CD8-positive, alpha-beta T cell (primary cell): ENCODE measurements at regions of chr10 and their contacts with region 1.

Region 1: DNA sequence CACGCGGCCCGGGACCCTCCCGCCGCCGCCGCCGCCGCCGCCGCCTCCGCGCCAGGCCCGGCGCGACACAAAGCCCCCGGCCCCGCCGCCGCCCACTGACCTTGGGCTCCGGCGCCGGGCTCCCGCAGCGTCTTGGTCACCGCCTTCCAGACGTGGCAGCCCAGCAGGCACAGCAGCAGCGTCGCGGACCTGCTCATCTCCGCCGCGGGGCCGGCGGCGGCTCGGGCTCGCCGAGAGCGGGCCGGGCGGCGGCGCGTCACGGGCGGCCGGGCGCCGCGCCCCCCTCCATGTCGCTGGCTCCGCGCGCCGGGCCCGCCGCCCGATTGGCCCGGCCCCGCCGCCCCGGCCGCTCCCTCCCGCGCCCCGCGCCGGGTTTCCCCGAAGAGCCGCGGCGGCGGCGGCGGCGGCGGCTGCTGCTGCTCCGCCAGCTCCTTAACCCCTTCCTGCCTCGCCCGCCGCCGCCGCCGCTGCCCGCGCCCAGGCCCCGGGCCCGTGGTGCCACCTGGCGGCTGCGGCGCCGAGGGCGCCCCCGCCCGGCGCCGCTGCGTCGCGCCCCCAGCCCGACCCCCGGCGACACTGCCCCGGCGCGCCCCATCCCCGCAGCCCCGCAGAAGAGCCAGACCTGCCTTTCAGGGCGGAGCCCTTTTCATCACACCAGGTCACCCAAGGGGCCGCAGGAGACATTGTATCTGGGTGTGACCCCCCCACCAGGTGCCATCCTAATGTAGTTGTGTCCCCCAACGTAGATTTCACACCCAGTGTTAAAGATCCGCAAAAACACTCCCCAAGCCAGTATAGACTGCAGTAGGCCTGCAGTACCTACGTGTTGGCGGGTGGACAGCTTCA is at the start of gene FAM171A1:
- DNase-seq: peak; percentile 12 to 80 (median 57)
- ATAC-seq: peak; percentile 78
- H3K4me3 ChIP-seq: peak within 1 kb of the TSS; percentile 25 to 33
- H3K4me3 Mint-ChIP-seq: peak within 1 kb of the TSS; percentile 80
- H3K27ac ChIP-seq: no peak within 1 kb of the TSS
- H3K27ac Mint-ChIP-seq: no peak within 1 kb of the TSS
- H3K4me1 ChIP-seq: peaks cover 9% of the 10 kb centered on the region
- H3K4me1 Mint-ChIP-seq: peaks cover 12% of the 10 kb centered on the region
- H3K27me3 ChIP-seq: peaks cover 0 to 9% of the 10 kb centered on the region in 2 experiments
- H3K27me3 Mint-ChIP-seq: peaks cover 33% of the 10 kb centered on the region
- CTCF ChIP-seq: no peak
- total RNA-seq, gene FAM171A1: 1.7 TPM

Region 2: GRCh38 chr10:14556285-14556956 is 814.7 kb before region 1 on chr10:
- CTCF ChIA-PET with region 1: no interaction called
- POLR2A ChIA-PET with region 1: no interaction called
- intact Hi-C with region 1: no loop called
- DNase-seq: peak in 4 of 9 experiments; percentile 5 to 76 (median 56)
- ATAC-seq: peak; percentile 24
- H3K4me3 ChIP-seq: no peak overlapping the region
- H3K4me3 Mint-ChIP-seq: peak overlapping the region; percentile 27
- H3K27ac ChIP-seq: peak overlapping the region in 1 of 2 experiments; percentile 82
- H3K27ac Mint-ChIP-seq: peak overlapping the region; percentile 86
- H3K4me1 ChIP-seq: peaks cover 98% of the 10 kb centered on the region
- H3K4me1 Mint-ChIP-seq: peaks cover 93% of the 10 kb centered on the region
- H3K27me3 ChIP-seq: no peaks in the 10 kb centered on the region
- H3K27me3 Mint-ChIP-seq: no peaks in the 10 kb centered on the region
- CTCF ChIP-seq: no peak

Region 3: GRCh38 chr10:15088428-15089261 is 282.4 kb before region 1 on chr10 and contains the start of gene ACBD7:
- CTCF ChIA-PET with region 1: no interaction called
- POLR2A ChIA-PET with region 1: no interaction called
- intact Hi-C with region 1: loop called in 1 of 2 experiments (anchors 5 kb)
- DNase-seq: peak; percentile 54 to 88 (median 76)
- ATAC-seq: peak; percentile 98
- H3K4me3 ChIP-seq: peak within 1 kb of the TSS; percentile 53 to 56
- H3K4me3 Mint-ChIP-seq: peak within 1 kb of the TSS; percentile 82
- H3K27ac ChIP-seq: no peak within 1 kb of the TSS
- H3K27ac Mint-ChIP-seq: no peak within 1 kb of the TSS
- H3K4me1 ChIP-seq: no peaks in the 10 kb centered on the region
- H3K4me1 Mint-ChIP-seq: peaks cover 4% of the 10 kb centered on the region
- H3K27me3 ChIP-seq: no peaks in the 10 kb centered on the region
- H3K27me3 Mint-ChIP-seq: no peaks in the 10 kb centered on the region
- CTCF ChIP-seq: peak; percentile 48
- total RNA-seq, gene ACBD7: 0.86 to 1.8 TPM

Region 4: DNA sequence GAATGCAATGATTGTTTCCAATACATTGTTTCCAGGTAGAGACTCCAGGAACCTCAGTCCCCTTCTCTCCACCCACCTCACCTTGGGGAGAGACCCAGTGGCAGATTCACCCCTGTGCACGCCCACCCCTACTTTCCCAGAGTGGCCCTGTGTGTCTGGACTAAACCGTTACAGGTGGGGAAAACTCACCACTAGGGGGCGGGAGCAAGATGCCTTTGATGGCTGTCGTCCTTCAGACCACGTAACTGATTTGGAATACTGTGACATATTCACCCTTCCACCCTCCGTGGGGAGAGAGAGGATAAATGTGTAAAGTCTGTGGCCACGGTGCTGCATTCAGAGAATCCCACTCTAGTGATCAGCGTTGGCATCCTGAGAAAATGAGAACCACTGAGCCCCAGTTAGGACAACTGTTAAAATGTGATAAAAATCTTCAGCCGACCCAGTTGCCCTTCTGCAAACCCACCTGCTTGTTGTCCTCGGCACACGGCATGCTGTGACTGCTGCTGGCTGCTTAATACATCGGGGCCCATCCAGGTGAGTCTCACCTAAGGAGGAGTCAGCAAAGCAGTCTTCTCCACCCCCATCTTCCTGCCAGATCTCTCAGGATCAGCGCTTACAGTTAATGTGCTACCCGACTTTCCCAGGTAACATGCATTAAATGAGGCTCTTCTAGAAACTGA is 161.1 kb before region 1 on chr10:
- CTCF ChIA-PET with region 1: no interaction called
- POLR2A ChIA-PET with region 1: no interaction called
- intact Hi-C with region 1: loop called (anchors 1 kb)
- DNase-seq: peak; percentile 58 to 90 (median 84)
- ATAC-seq: peak; percentile 61
- H3K4me3 ChIP-seq: no peak overlapping the region
- H3K4me3 Mint-ChIP-seq: peak overlapping the region; percentile 70
- H3K27ac ChIP-seq: no peak overlapping the region
- H3K27ac Mint-ChIP-seq: peak overlapping the region; percentile 73
- H3K4me1 ChIP-seq: peaks cover 30% of the 10 kb centered on the region
- H3K4me1 Mint-ChIP-seq: peaks cover 60% of the 10 kb centered on the region
- H3K27me3 ChIP-seq: no peaks in the 10 kb centered on the region
- H3K27me3 Mint-ChIP-seq: no peaks in the 10 kb centered on the region
- CTCF ChIP-seq: peak; percentile 90

Region 5: GRCh38 chr10:15254808-15255648 is 116.1 kb before region 1 on chr10:
- CTCF ChIA-PET with region 1: no interaction called
- POLR2A ChIA-PET with region 1: no interaction called
- intact Hi-C with region 1: loop called in 1 of 2 experiments (anchors 5 kb)
- DNase-seq: peak in 7 of 9 experiments; percentile 2 to 57 (median 22)
- ATAC-seq: peak; percentile 34
- H3K4me3 ChIP-seq: peak overlapping the region; percentile 50 to 73
- H3K4me3 Mint-ChIP-seq: peak overlapping the region; percentile 98
- H3K27ac ChIP-seq: peak overlapping the region; percentile 13 to 20
- H3K27ac Mint-ChIP-seq: peak overlapping the region; percentile 93
- H3K4me1 ChIP-seq: peaks cover 18% of the 10 kb centered on the region
- H3K4me1 Mint-ChIP-seq: peaks cover 43% of the 10 kb centered on the region
- H3K27me3 ChIP-seq: no peaks in the 10 kb centered on the region
- H3K27me3 Mint-ChIP-seq: no peaks in the 10 kb centered on the region
- CTCF ChIP-seq: no peak

Region 6: DNA sequence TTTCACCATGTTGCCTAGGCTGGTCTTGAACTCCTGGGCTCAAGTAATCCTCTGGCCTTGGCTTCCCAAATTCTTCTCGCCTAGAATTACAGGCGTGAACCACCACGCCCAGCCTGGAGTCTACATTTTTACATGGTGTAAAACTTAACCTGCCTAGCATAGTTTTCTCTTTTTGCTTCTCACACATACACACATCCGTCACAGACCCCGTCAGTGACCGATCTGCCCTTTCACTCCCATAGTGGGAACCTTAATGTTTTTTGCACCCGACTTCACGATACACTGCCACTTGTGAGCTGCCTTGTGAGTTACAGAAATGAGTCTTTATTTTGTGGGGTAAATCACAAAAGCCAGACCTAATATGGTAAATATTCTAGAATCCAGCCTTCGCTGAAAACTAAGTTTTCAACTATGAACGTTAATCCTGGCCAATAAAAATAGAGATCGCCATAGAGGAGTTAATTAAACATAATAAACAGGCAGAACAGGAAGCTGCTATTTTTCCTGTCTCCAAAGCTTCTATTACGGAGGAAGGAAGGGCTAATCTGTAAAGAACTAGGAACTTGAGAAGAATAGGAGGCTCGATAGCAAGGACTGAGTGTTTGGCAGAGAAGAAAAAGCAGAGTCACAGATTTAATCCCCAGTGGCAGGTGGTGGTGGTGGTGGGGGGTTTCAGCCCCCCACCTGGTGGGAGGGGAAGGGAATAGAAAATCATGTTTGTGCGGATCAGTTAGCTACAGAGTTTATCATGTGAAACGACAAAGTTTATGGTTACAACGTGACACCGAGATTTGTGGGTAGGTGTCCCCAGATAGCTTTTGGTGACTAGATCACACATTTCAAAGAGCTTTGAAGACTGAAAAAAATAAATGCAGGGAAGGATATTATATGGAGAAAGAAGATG is 14.7 kb after region 1 on chr10:
- CTCF ChIA-PET with region 1: no interaction called
- POLR2A ChIA-PET with region 1: no interaction called
- intact Hi-C with region 1: no loop called
- DNase-seq: no peak
- ATAC-seq: no peak
- H3K4me3 ChIP-seq: no peak overlapping the region
- H3K4me3 Mint-ChIP-seq: no peak overlapping the region
- H3K27ac ChIP-seq: no peak overlapping the region
- H3K27ac Mint-ChIP-seq: no peak overlapping the region
- H3K4me1 ChIP-seq: no peaks in the 10 kb centered on the region
- H3K4me1 Mint-ChIP-seq: no peaks in the 10 kb centered on the region
- H3K27me3 ChIP-seq: peaks cover 0 to 2% of the 10 kb centered on the region in 2 experiments
- H3K27me3 Mint-ChIP-seq: peaks cover 49% of the 10 kb centered on the region
- CTCF ChIP-seq: no peak